Naive thymus-derived CD8-positive, alpha-beta T cell (primary cell): ENCODE measurements at regions of chr1 and their contacts with region 1.

Region 1: GRCh38 chr1:44775078-44775929 is at the start of gene RPS8:
- DNase-seq: peak; percentile 67 to 95 (median 87)
- ATAC-seq: peak; percentile 82 to 83
- H3K4me3 Mint-ChIP-seq: peak within 1 kb of the TSS; percentile 84 to 100 (median 93)
- H3K27ac Mint-ChIP-seq: peak within 1 kb of the TSS; percentile 92 to 99 (median 96)
- H3K4me1 Mint-ChIP-seq: peaks cover 23 to 42% (median 34%) of the 10 kb centered on the region in 4 donors
- H3K27me3 Mint-ChIP-seq: no peaks in the 10 kb centered on the region
- polyA plus RNA-seq, gene RPS8: 1,336 to 1,571 (median 1,431) TPM

Region 2: DNA sequence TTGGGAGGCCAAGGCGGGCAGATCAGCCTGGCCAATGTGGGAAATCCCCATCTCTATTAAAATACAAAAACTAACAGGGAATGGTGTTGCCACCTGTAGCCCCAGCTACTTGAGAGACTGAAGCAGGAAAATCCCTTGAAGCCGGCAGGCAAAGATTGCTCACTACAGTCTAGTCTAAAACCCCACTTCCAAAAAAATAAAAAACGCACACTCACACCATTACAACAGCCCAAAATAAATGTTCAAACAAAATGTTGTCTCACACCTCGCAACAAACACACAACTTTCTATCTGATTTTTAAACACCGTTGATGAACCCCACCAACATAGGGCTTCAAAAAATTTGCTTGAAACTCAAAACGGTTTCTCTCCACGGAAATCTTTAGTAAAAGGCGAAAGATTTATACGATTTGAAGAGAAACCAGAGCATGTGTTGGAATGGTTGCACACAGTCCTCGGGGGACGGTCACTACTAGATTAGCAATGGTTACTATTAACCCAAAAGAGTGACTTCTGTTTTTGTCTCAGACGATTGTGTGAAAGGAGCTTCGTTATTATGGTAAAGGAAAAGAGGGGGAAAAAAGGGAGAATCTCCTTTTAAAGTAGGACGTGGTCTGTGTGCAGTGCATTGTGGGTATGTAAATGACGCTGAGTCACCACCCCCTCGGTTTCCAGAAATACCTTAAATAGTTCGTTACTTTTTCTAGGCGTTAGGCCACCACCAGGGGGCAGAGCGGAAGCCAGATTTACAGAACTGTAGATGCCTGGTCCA is 44.4 kb before region 1 on chr1 and contains the start of gene RNU5D-1:
- POLR2A ChIA-PET with region 1: interaction called, 109 read pairs
- DNase-seq: peak; percentile 84 to 96 (median 90)
- ATAC-seq: peak; percentile 80 to 83
- H3K4me3 Mint-ChIP-seq: peak within 1 kb of the TSS; percentile 53 to 89 (median 80)
- H3K27ac Mint-ChIP-seq: peak within 1 kb of the TSS; percentile 96 to 100 (median 99)
- H3K4me1 Mint-ChIP-seq: peaks cover 19 to 40% (median 32%) of the 10 kb centered on the region in 4 donors
- H3K27me3 Mint-ChIP-seq: no peaks in the 10 kb centered on the region
- polyA plus RNA-seq, gene RNU5D-1: not detected

Region 3: DNA sequence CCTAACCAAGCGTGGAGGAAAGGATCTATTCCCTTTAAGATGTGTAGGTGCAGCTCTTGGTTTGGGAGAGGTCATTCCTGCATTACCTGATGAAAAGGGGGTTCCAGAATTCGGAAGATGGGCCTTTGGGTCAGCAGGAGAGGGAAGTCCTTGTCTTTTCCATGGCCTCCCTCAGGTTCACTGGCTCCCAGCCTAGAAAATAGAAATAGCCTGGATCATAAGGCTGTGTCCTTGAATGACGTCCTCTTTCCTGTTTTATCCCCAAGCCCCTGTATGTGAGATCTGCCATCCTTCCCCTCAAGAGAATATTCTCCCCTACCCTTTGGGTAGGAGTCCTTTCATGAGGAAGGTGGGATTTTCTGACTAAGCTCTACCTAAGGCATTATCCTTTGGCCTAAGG is 14.4 kb before region 1 on chr1:
- POLR2A ChIA-PET with region 1: interaction called, 10 read pairs
- DNase-seq: no peak
- ATAC-seq: no peak
- H3K4me3 Mint-ChIP-seq: no peak overlapping the region
- H3K27ac Mint-ChIP-seq: no peak overlapping the region
- H3K4me1 Mint-ChIP-seq: peaks cover 1 to 12% (median 10%) of the 10 kb centered on the region in 4 donors
- H3K27me3 Mint-ChIP-seq: no peaks in the 10 kb centered on the region

Region 4: GRCh38 chr1:44807262-44808062 is 32.2 kb after region 1 on chr1 and contains the start of gene DYNLT4:
- POLR2A ChIA-PET with region 1: interaction called, 47 read pairs
- DNase-seq: peak; percentile 72 to 96 (median 90)
- ATAC-seq: peak; percentile 56 to 69
- H3K4me3 Mint-ChIP-seq: peak within 1 kb of the TSS; percentile 40 to 91 (median 78)
- H3K27ac Mint-ChIP-seq: peak within 1 kb of the TSS; percentile 98 to 100 (median 99)
- H3K4me1 Mint-ChIP-seq: peaks cover 42 to 87% (median 81%) of the 10 kb centered on the region in 4 donors
- H3K27me3 Mint-ChIP-seq: no peaks in the 10 kb centered on the region
- polyA plus RNA-seq, gene DYNLT4: 0.24 to 0.86 TPM in 2 of 3 donors, not detected in the other

Region 5: GRCh38 chr1:44985747-44986359 is 210.5 kb after region 1 on chr1:
- POLR2A ChIA-PET with region 1: interaction called, 11 read pairs
- DNase-seq: no peak
- ATAC-seq: no peak
- H3K4me3 Mint-ChIP-seq: peak overlapping the region; percentile 94 to 100 (median 99)
- H3K27ac Mint-ChIP-seq: peak overlapping the region in 9 of 10 donors; percentile 88 to 97 (median 94)
- H3K4me1 Mint-ChIP-seq: peaks cover 9 to 27% (median 23%) of the 10 kb centered on the region in 4 donors
- H3K27me3 Mint-ChIP-seq: no peaks in the 10 kb centered on the region